Naive thymus-derived CD4-positive, alpha-beta T cell (primary cell): ENCODE measurements at regions of chr2 and their contacts with region 1.

Region 1: GRCh38 chr2:118992740-118993391 is 50.9 kb downstream of the MARCO start:
- DNase-seq: no peak
- ATAC-seq: no peak
- H3K4me3 ChIP-seq: no peak overlapping the region
- H3K4me3 Mint-ChIP-seq: no peak overlapping the region
- H3K27ac ChIP-seq: no peak overlapping the region
- H3K27ac Mint-ChIP-seq: peak overlapping the region in 2 of 9 donors; percentile 64 to 71
- H3K4me1 ChIP-seq: no peaks in the 10 kb centered on the region
- H3K4me1 Mint-ChIP-seq: peaks cover 0 to 5% (median 0%) of the 10 kb centered on the region in 7 donors
- H3K27me3 ChIP-seq: no peaks in the 10 kb centered on the region
- H3K27me3 Mint-ChIP-seq: peaks cover 0 to 6% (median 0%) of the 10 kb centered on the region in 5 donors

Region 2: DNA sequence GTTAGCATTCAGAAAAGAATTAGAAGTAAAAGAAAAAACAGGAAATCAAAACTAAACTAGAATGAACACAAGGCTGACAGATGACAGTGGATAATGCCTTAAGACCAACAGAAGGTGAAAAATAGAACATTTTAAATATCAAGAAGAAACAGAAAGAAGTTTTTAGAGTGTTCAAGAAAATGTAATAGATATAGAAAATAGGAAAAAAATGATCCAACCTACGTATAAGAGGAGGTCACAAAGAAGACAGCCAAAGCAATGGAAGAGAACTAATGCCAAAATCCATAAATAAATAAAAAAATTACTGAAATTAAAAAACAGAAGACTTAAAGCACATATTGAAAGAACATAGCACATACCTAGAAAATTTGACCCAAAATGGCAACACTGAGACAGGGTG is 102.9 kb before region 1 on chr2:
- CTCF ChIA-PET with region 1: no interaction called
- POLR2A ChIA-PET with region 1: no interaction called
- intact Hi-C with region 1: loop called in 1 of 2 experiments (anchors 5 kb)
- DNase-seq: no peak
- ATAC-seq: no peak
- H3K4me3 ChIP-seq: no peak overlapping the region
- H3K4me3 Mint-ChIP-seq: no peak overlapping the region
- H3K27ac ChIP-seq: no peak overlapping the region
- H3K27ac Mint-ChIP-seq: no peak overlapping the region
- H3K4me1 ChIP-seq: no peaks in the 10 kb centered on the region
- H3K4me1 Mint-ChIP-seq: no peaks in the 10 kb centered on the region
- H3K27me3 ChIP-seq: no peaks in the 10 kb centered on the region
- H3K27me3 Mint-ChIP-seq: peaks cover 0 to 5% (median 0%) of the 10 kb centered on the region in 5 donors

Region 3: DNA sequence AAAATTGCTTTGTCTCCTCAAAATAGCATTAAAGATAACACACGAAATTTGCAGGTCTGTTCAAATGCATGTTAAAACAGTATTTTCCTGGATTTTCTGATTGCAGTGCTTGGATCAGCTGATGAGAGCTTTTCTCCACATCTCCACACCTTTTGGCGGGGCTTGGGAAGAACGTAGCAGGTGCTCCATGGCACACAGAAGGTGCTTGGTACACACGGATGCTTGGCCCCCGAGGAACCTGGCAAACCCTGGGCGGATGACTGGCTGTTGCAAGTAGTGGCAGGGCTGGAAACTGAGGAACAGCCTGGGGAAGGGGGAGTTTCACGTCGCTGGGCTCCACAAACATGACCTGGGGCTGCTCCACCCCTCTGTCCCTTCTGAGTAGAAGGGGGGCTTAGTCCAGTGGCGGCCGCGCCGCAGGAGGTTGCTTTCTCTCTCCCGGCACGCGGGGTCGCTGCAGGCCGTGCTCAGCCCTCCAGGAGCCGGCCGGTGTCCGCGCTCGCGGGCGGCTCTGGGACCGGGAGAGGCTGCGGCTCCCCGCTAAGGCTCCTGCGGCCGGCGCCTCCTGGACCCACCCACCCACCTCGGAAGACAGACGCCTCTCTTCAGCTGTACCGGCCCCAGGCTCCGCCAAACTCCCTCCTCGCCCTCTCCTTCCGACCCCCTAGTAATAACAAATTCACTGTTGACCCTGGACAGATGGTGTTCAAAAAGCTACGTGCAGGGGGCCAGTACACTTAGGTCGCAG is 18.5 kb after region 1 on chr2:
- CTCF ChIA-PET with region 1: no interaction called
- POLR2A ChIA-PET with region 1: no interaction called
- intact Hi-C with region 1: no loop called
- DNase-seq: no peak
- ATAC-seq: peak; percentile 60
- H3K4me3 ChIP-seq: no peak overlapping the region
- H3K4me3 Mint-ChIP-seq: peak overlapping the region in 1 of 10 donors; percentile 40
- H3K27ac ChIP-seq: no peak overlapping the region
- H3K27ac Mint-ChIP-seq: peak overlapping the region in 1 of 9 donors; percentile 32
- H3K4me1 ChIP-seq: no peaks in the 10 kb centered on the region
- H3K4me1 Mint-ChIP-seq: peaks cover 0 to 4% (median 0%) of the 10 kb centered on the region in 7 donors
- H3K27me3 ChIP-seq: no peaks in the 10 kb centered on the region
- H3K27me3 Mint-ChIP-seq: peaks cover 17 to 46% (median 36%) of the 10 kb centered on the region in 5 donors